Colonic mucosa (tissue), 4 donors: ENCODE measurements at regions of chr19 and their contacts with region 1.

Region 1: DNA sequence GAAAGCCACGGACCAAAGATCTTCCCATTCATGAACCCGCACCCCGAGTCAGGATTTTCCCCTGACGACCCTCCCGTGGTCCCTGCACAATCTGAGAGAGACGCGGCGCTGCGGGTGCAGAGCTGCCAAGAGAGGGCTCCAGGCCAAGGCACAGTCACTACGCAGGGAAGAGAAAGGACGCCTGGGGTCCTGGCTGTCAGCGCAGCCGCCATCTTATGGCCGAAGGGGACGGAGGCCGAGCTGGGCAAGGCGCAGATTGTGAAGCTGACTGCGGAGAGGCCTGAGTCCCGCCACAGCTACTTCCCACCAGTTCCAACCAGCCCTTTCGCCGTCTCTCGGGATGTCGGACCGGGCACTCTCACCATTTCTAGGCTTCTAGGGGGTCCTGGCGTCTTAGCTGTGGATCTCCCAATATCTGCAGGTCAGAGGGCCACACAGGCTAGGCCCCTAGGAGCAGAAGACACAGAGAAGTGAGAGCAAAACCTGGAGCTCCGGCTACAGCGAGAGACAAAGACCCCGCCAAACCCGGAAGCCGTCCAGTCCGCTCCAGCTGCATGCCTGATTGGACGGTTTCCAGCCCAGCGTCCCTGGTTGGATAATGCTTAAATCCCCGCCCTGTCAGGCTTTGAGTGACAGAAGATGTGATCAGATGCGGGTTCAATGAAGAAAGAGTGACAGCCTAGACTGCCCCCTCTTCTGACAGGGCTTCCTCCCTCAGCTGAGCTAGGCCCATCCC is at the start of gene ZNF100:
- DNase-seq: peak; percentile 94
- H3K4me3 ChIP-seq: peak within 1 kb of the TSS; percentile 68
- H3K27ac ChIP-seq: peak within 1 kb of the TSS; percentile 78
- H3K4me1 ChIP-seq: no peaks in the 10 kb centered on the region
- H3K27me3 ChIP-seq: no peaks in the 10 kb centered on the region
- CTCF ChIP-seq: no peak
- total RNA-seq, gene ZNF100: 9.7 to 16.0 TPM

Region 2: GRCh38 chr19:21835810-21836444 is 68.7 kb after region 1 on chr19 and contains the start of gene ZNF43:
- intact Hi-C with region 1: loop called (anchors 5 kb)
- DNase-seq: peak; percentile 99
- H3K4me3 ChIP-seq: peak within 1 kb of the TSS; percentile 61
- H3K27ac ChIP-seq: peak within 1 kb of the TSS; percentile 88
- H3K4me1 ChIP-seq: no peaks in the 10 kb centered on the region
- H3K27me3 ChIP-seq: no peaks in the 10 kb centered on the region
- CTCF ChIP-seq: no peak
- total RNA-seq, gene ZNF43: 8.7 to 13.8 TPM

Region 3: GRCh38 chr19:21921691-21922180 is 154.5 kb after region 1 on chr19:
- intact Hi-C with region 1: no loop called
- DNase-seq: no peak
- H3K4me3 ChIP-seq: no peak overlapping the region
- H3K27ac ChIP-seq: no peak overlapping the region
- H3K4me1 ChIP-seq: no peaks in the 10 kb centered on the region
- H3K27me3 ChIP-seq: no peaks in the 10 kb centered on the region
- CTCF ChIP-seq: no peak